ENCODE measurements at regions of chr5 and their contacts with region 1.

Region 1: DNA sequence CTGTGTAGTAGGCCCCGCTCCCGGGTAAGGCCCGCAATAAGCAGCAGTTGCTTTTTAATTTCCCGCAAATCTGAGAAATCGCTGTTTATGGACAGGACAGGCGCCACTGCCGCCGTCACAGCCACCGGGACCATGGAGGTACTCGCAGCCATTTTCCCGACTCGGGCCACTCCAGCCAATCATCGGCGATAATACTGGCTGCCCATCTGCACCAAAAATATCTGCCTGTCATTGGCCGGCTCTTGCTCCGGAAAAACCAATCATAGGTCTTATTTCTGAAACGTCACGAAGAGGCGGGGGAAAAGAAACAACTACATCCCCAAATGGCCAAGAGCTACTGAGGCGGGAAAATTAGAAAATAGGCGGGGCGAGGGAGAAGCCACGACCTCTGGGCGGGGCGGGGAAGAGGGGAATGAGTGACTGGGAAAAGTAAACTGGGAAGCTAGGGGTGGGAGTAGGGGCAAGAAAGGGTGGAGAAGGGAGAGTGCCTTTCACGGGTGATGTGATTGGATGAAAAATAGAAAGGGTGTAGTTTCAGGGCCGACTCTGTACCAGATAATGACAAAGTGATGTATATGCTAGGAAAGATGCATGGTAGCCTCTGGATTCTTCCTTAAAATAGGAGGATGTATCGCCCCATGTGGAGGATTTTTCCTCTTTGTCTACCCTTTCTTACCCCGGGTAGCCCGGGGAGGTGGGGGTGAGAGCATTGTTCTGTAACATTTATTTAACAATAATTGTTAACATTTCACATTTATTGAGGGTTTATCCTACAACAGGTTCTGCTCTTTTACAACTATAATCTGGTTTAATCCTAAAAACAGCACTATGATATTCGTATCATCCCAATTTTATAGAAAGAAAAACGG is at the start of gene CDC23:
- DNase-seq: peak; percentile 65 to 95 (median 92)
- ATAC-seq: peak; percentile 98
- H3K4me3 ChIP-seq: peak within 1 kb of the TSS; percentile 97
- H3K4me3 Mint-ChIP-seq: peak within 1 kb of the TSS; percentile 92 to 99 (median 98)
- H3K27ac ChIP-seq: peak within 1 kb of the TSS; percentile 91
- H3K27ac Mint-ChIP-seq: peak within 1 kb of the TSS; percentile 95 to 98 (median 96)
- H3K4me1 ChIP-seq: peaks cover 0 to 8% of the 10 kb centered on the region in 2 donors
- H3K4me1 Mint-ChIP-seq: peaks cover 14 to 32% (median 27%) of the 10 kb centered on the region in 7 donors
- H3K27me3 ChIP-seq: no peaks in the 10 kb centered on the region
- H3K27me3 Mint-ChIP-seq: no peaks in the 10 kb centered on the region
- total RNA-seq, gene CDC23: 13.0 to 39.6 (median 25.5) TPM

Region 2: DNA sequence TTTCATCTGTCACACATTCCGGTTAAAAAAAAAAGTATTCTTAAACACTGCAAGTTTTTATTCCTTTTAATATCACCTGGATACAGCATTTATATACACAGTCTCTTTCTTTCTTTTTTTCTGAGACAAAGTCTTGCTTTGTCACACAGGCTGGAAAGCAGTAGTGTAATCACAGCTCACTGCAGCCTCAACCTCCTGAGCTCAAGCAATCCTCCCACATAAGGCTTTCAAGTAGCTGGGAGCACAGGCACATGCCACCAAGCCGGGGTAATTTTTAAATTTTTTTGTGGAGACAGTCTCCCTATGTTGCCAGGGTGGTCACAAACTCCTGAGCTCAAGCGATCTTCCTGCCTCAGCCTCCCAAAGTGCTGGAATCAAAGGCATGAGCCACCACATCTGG is 20.6 kb before region 1 on chr5:
- CTCF ChIA-PET with region 1: no interaction called
- POLR2A ChIA-PET with region 1: no interaction called
- intact Hi-C with region 1: no loop called
- DNase-seq: no peak
- ATAC-seq: no peak
- H3K4me3 ChIP-seq: no peak overlapping the region
- H3K4me3 Mint-ChIP-seq: no peak overlapping the region
- H3K27ac ChIP-seq: no peak overlapping the region
- H3K27ac Mint-ChIP-seq: no peak overlapping the region
- H3K4me1 ChIP-seq: no peaks in the 10 kb centered on the region
- H3K4me1 Mint-ChIP-seq: no peaks in the 10 kb centered on the region
- H3K27me3 ChIP-seq: no peaks in the 10 kb centered on the region
- H3K27me3 Mint-ChIP-seq: no peaks in the 10 kb centered on the region

Region 3: GRCh38 chr5:138331449-138332368 is 118.3 kb after region 1 on chr5 and contains the start of gene CDC25C:
- CTCF ChIA-PET with region 1: interaction called, 3 read pairs
- POLR2A ChIA-PET with region 1: interaction called, 4 read pairs
- intact Hi-C with region 1: loop called (anchors 1 kb)
- DNase-seq: peak; percentile 87 to 98 (median 96)
- ATAC-seq: peak; percentile 100
- H3K4me3 ChIP-seq: peak within 1 kb of the TSS; percentile 85
- H3K4me3 Mint-ChIP-seq: peak within 1 kb of the TSS; percentile 83 to 95 (median 86)
- H3K27ac ChIP-seq: peak within 1 kb of the TSS; percentile 49
- H3K27ac Mint-ChIP-seq: peak within 1 kb of the TSS; percentile 48 to 92 (median 68)
- H3K4me1 ChIP-seq: peaks cover 1 to 7% of the 10 kb centered on the region in 2 donors
- H3K4me1 Mint-ChIP-seq: peaks cover 7 to 35% (median 14%) of the 10 kb centered on the region in 7 donors
- H3K27me3 ChIP-seq: no peaks in the 10 kb centered on the region
- H3K27me3 Mint-ChIP-seq: no peaks in the 10 kb centered on the region
- total RNA-seq, gene CDC25C: 9.8 TPM in 1 of 5 experiments, not detected in the others

Region 4: GRCh38 chr5:138337685-138338410 is 124.5 kb after region 1 on chr5 and contains the start of gene FAM53C:
- CTCF ChIA-PET with region 1: no interaction called
- POLR2A ChIA-PET with region 1: interaction called, 6 read pairs
- intact Hi-C with region 1: loop called (anchors 1 kb)
- DNase-seq: peak; percentile 87 to 98 (median 93)
- ATAC-seq: peak; percentile 91
- H3K4me3 ChIP-seq: peak within 1 kb of the TSS; percentile 86
- H3K4me3 Mint-ChIP-seq: peak within 1 kb of the TSS; percentile 77 to 98 (median 94)
- H3K27ac ChIP-seq: peak within 1 kb of the TSS; percentile 95
- H3K27ac Mint-ChIP-seq: peak within 1 kb of the TSS; percentile 96 to 100 (median 99)
- H3K4me1 ChIP-seq: peaks cover 17 to 25% of the 10 kb centered on the region in 2 donors
- H3K4me1 Mint-ChIP-seq: peaks cover 16 to 42% (median 39%) of the 10 kb centered on the region in 7 donors
- H3K27me3 ChIP-seq: no peaks in the 10 kb centered on the region
- H3K27me3 Mint-ChIP-seq: no peaks in the 10 kb centered on the region
- total RNA-seq, gene FAM53C: 25.0 to 71.8 (median 27.7) TPM

Region 5: DNA sequence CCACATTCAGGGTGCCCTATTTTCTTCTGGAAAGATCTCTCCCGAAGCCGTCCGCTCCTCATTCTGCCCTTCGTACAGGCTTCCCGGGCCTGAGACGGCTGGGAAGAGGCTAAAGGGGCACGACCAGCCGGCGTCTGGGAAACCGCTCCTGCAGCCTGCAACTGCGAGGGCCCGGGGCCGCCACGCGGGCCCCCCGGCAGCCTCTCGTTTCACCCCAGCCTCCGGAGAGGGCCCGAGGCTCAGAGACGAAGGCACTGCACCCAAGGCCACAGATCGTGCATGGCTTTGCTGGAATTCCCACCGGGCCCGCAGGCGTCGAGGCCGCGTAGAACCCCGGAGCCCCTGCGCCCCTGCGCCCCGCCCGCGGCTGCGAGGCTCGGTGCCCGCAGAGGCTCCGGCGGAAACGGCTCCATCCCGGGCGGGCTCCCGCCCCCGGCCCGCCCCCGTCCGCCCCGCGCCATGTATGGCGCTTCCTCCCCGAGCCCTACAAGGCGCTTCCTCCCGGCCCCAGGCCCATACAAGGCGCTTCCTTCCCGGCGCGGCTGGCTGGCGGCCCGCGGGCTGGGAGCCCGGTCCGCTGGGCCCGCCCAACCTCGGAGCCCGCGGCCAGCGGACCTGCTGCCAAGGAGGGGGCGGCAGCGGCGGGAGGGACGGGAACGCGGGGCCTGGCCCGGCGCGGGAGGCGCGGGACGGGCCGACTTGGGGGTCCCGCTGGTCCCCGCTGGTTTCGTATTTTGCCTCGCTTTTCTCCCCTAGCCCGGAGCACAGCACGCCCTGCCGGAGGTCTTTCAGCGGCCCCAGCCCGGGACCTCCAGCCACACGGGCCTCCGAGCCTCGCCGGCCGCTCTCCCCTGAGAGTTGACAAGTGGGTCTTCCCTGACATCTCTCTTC is 278.5 kb after region 1 on chr5:
- CTCF ChIA-PET with region 1: no interaction called
- POLR2A ChIA-PET with region 1: no interaction called
- intact Hi-C with region 1: loop called in 1 of 2 experiments (anchors 1 kb)
- DNase-seq: peak; percentile 66 to 87 (median 81)
- ATAC-seq: peak; percentile 99
- H3K4me3 ChIP-seq: peak overlapping the region; percentile 69
- H3K4me3 Mint-ChIP-seq: peak overlapping the region; percentile 76 to 97 (median 92)
- H3K27ac ChIP-seq: peak overlapping the region; percentile 37
- H3K27ac Mint-ChIP-seq: peak overlapping the region in 7 of 9 donors; percentile 40 to 90 (median 67)
- H3K4me1 ChIP-seq: peaks cover 13 to 14% of the 10 kb centered on the region in 2 donors
- H3K4me1 Mint-ChIP-seq: peaks cover 8 to 21% (median 13%) of the 10 kb centered on the region in 7 donors
- H3K27me3 ChIP-seq: peaks cover 0 to 6% of the 10 kb centered on the region in 2 donors
- H3K27me3 Mint-ChIP-seq: peaks cover 0 to 38% (median 5%) of the 10 kb centered on the region in 5 donors